ENCODE measurements at regions of chr7 and their contacts with region 1.

Region 1: DNA sequence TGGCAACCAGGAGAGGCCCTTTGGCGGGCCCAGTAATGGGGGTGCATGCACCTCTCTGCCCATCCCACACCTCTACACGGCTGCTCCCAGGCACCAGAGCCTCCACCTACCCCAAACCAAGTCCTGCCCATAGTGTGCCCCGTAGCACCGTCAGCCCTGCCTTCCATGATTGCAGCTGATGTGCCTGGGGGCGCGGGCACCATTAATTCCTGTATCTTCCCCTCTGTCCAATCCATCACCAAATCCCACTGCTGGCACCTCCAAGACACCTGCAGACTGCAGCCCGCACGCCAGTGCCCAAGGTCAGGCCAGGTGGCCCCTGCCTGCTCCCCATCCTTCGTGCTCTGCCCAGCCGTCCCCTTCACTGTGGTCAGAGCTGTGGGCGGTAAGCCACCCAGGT is 533.0 kb downstream of the PTPRN2 start:
- DNase-seq: no peak
- ATAC-seq: no peak; the same call in 2 of the 3 replicates
- H3K4me3 ChIP-seq: no peak overlapping the region
- H3K27ac ChIP-seq: no peak overlapping the region
- H3K4me1 ChIP-seq: no peaks in the 10 kb centered on the region
- H3K27me3 ChIP-seq: no peaks in the 10 kb centered on the region
- CTCF ChIP-seq: no peak
- EP300 ChIP-seq: no peak
- POLR2A ChIP-seq: no peak
- RAD21 ChIP-seq: no peak

Region 2: DNA sequence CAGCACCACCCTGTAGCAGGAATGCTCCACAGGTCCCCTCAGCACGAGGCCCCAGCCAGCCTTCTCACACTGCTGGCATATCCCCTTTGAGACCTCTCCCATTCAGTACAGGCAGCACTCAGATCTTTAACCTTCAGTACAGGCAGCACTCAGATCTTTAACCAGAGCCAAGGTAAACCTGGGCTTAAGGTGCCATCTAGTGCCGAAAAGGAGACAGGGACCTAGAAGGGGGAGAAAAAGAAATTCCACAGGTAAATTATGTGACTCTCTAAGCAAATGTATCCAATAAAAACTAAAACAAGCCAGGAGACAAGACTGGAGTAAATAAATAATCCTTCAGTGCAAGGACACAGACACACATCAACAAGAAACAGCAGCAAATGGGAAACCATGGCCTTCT is 174.4 kb after region 1 on chr7:
- CTCF ChIA-PET with region 1: interaction called, 4 read pairs
- POLR2A ChIA-PET with region 1: no interaction called
- in situ Hi-C with region 1: no loop called
- intact Hi-C with region 1: loop called (anchors 1 kb)
- DNase-seq: peak; percentile 31
- ATAC-seq: peak; percentile 78
- H3K4me3 ChIP-seq: no peak overlapping the region
- H3K27ac ChIP-seq: no peak overlapping the region
- H3K4me1 ChIP-seq: no peaks in the 10 kb centered on the region
- H3K27me3 ChIP-seq: no peaks in the 10 kb centered on the region
- CTCF ChIP-seq: peak; percentile 73
- EP300 ChIP-seq: no peak
- POLR2A ChIP-seq: no peak
- RAD21 ChIP-seq: peak; percentile 59; the same call in 1 of the 2 replicates

Region 3: GRCh38 chr7:158239290-158239981 is 184.8 kb after region 1 on chr7:
- CTCF ChIA-PET with region 1: no interaction called
- POLR2A ChIA-PET with region 1: no interaction called
- in situ Hi-C with region 1: no loop called
- intact Hi-C with region 1: no loop called
- DNase-seq: no peak
- ATAC-seq: no peak; the same call in 2 of the 3 replicates
- H3K4me3 ChIP-seq: no peak overlapping the region
- H3K27ac ChIP-seq: no peak overlapping the region
- H3K4me1 ChIP-seq: no peaks in the 10 kb centered on the region
- H3K27me3 ChIP-seq: no peaks in the 10 kb centered on the region
- CTCF ChIP-seq: no peak
- EP300 ChIP-seq: no peak
- POLR2A ChIP-seq: no peak
- RAD21 ChIP-seq: no peak

Region 4: DNA sequence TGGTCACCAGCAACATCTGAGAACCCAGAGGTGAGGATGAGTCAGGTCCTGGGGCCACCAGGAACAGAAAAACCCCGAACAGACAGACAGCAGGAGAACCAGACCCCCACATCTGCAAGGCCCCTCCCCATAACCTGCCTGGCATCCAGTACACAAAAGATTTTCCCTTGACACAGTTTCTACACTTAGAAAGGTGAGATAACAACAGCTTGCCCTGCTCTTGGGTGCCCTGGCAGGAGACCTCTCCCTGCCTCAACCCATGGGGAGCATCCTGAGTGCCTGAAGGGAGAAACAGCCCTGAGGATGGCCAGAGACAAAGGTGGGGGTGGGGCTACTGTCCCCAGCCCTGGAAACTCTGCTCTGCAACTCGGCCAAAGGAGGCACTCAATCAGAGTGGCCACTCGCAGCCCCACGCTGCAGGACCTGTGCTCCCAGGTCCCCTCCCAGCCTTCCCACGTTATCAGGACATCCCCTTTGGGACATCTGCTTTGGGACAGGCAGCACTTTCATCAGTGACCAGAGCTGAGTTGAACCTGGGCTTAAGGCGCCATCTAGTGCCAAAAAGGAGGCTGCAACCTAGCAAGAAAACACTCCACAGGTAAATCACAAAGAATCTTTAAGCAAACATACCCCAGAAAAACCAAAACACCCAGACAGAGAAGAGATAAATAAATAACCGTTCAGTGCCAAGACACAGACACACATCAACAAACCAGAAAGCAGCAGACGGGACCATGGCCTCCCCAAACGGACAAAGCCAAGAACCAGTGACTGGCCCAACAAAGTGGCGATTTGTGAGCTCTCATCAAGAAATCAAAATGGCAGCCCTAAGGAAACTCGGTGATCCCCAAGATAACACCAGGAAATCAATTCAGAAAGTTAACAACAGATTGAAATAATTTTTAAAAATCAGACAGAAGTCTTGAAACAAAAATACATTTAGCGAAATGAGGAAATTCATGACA is 299.3 kb after region 1 on chr7:
- CTCF ChIA-PET with region 1: no interaction called
- POLR2A ChIA-PET with region 1: no interaction called
- in situ Hi-C with region 1: loop called (anchors 25 kb)
- intact Hi-C with region 1: loop called (anchors 5 kb)
- DNase-seq: peak; percentile 22
- ATAC-seq: peak; percentile 59
- H3K4me3 ChIP-seq: no peak overlapping the region
- H3K27ac ChIP-seq: no peak overlapping the region
- H3K4me1 ChIP-seq: no peaks in the 10 kb centered on the region
- H3K27me3 ChIP-seq: no peaks in the 10 kb centered on the region; a peak in 1 of 5 replicates
- CTCF ChIP-seq: peak; percentile 81
- EP300 ChIP-seq: no peak
- POLR2A ChIP-seq: no peak
- RAD21 ChIP-seq: 0 out of 2 replicates have a peak, but pooled peaks have one; percentile 26

Measured in HepG2 (cell line).